ENCODE measurements at regions of chr11 and their contacts with region 1.

Region 1: DNA sequence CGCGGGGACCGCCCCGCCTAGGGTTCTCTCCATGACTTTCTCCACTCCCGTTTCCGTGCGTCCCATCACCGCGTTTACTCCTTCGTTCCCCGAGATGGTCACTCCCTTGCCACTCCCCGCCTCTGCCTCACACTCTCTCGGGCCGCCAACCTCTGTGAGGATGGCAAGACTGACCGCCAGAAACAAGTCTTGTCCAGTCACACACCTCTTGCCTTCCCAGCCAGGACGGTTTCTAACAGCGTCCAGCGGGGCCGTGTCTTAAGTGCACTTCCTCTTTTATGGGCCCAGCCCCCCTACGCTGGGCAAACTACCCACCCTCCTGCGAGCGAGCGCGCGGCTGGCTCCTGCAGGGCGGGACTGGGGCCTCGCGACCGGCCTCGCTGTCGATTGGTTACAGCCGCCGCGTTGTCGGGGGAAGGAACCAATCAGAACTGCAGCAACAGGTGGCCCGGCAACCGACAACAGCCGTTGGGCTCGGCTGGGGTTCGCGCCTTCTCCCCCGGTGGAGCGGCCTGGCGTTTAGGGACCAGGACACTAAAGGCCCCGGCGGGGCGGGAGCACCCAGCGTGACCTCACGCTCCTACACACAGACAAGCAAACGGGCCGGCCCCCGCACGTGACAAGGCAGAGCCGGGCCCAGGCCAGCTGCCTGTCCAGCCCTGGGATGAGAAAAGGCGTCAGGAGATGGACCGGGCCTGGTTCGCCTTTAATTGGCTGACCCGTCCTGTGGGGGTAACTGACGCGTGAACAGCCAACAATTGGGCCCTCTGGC is 512 bp upstream of the UCP2 start:
- DNase-seq: peak; percentile 98 to 99
- ATAC-seq: peak; percentile 93 to 94
- H3K4me3 ChIP-seq: peak overlapping the region; percentile 62
- H3K27ac ChIP-seq: peak overlapping the region; percentile 88 to 92
- H3K4me1 ChIP-seq: peaks cover 31% of the 10 kb centered on the region
- CTCF ChIP-seq: no peak
- EP300 ChIP-seq: no peak
- POLR2A ChIP-seq: no peak; the same call in none of the 2 replicates
- RAD21 ChIP-seq: no peak

Region 2: DNA sequence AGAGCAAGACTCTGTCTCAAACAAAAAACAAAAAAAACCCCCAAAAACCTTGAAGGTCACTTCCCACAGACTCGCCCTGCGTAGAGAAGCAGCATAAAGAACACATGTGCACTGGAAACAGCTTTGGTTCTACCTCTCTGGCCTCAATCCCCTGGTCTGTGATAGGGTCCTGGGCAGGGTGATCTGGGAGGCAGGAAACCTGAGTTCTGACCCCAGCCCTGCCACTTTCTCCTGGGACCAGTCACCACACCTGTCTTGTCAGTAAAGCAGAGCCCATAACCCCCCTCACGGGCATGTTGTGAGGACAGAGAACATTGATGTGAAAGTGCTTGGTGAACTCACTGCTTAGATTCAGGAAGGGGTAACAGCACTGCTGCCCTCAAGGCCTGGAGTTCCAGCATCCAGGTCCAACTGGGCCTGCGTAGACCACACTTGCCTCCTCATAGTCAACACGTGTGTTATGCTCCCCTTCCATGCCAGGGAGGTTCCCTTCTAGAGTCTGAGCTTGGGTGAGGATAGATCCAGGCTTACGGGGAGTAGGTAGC is 11.9 kb before region 1 on chr11:
- CTCF ChIA-PET with region 1: interaction called, 61 read pairs
- POLR2A ChIA-PET with region 1: interaction called, 10 read pairs
- DNase-seq: no peak
- ATAC-seq: no peak
- H3K4me3 ChIP-seq: no peak overlapping the region
- H3K27ac ChIP-seq: no peak overlapping the region
- H3K4me1 ChIP-seq: peaks cover 6% of the 10 kb centered on the region; the same call in 2 of the 3 replicates
- CTCF ChIP-seq: no peak
- EP300 ChIP-seq: no peak
- POLR2A ChIP-seq: no peak
- RAD21 ChIP-seq: no peak

Region 3: GRCh38 chr11:74011360-74012073 is 28.4 kb after region 1 on chr11:
- CTCF ChIA-PET with region 1: no interaction called
- POLR2A ChIA-PET with region 1: no interaction called
- DNase-seq: no peak
- ATAC-seq: no peak
- H3K4me3 ChIP-seq: no peak overlapping the region
- H3K27ac ChIP-seq: no peak overlapping the region
- H3K4me1 ChIP-seq: no peaks in the 10 kb centered on the region
- CTCF ChIP-seq: no peak
- EP300 ChIP-seq: no peak
- POLR2A ChIP-seq: no peak
- RAD21 ChIP-seq: no peak

Measured in A549 (cell line).